Lower lobe of right lung (tissue), 2 donors: ENCODE measurements at regions of chr6 and their contacts with region 1.

Region 1: GRCh38 chr6:5401845-5402738 is 140.8 kb downstream of the FARS2 start:
- DNase-seq: no peak
- ATAC-seq: no peak
- H3K4me3 ChIP-seq: no peak overlapping the region
- H3K27ac ChIP-seq: no peak overlapping the region
- H3K4me1 ChIP-seq: no peaks in the 10 kb centered on the region
- H3K27me3 ChIP-seq: no peaks in the 10 kb centered on the region
- CTCF ChIP-seq: peak; percentile 37

Region 2: GRCh38 chr6:5143634-5144311 is 258.3 kb before region 1 on chr6:
- intact Hi-C with region 1: loop called (anchors 10 kb)
- DNase-seq: peak; percentile 89
- ATAC-seq: peak; percentile 75 to 82
- H3K4me3 ChIP-seq: no peak overlapping the region
- H3K27ac ChIP-seq: no peak overlapping the region
- H3K4me1 ChIP-seq: no peaks in the 10 kb centered on the region
- H3K27me3 ChIP-seq: no peaks in the 10 kb centered on the region
- CTCF ChIP-seq: peak; percentile 94

Region 3: DNA sequence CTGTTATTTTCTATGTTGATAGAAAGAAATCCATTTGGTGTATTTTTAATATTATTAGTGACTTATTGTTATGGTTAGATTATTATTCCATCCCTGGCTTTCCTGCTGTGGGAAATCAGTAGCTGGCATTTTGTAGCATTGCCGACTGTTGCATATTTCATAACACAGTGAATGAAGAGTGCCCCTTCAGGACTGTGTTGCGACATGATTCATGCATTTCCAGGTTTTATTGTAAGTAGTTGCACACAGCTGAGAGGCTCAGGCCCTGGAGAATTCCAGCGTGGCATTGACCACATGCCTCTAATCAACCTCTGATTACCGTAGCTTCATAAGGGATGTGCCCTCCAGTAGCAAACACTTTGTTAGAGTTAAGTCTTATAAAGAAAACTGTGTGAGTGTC is 123.1 kb after region 1 on chr6:
- intact Hi-C with region 1: no loop called
- DNase-seq: no peak
- ATAC-seq: peak; percentile 84 to 94
- H3K4me3 ChIP-seq: no peak overlapping the region
- H3K27ac ChIP-seq: no peak overlapping the region
- H3K4me1 ChIP-seq: peaks cover 13% of the 10 kb centered on the region
- H3K27me3 ChIP-seq: no peaks in the 10 kb centered on the region
- CTCF ChIP-seq: no peak

Region 4: GRCh38 chr6:5547556-5547955 is 145.5 kb after region 1 on chr6:
- intact Hi-C with region 1: no loop called
- DNase-seq: no peak
- ATAC-seq: no peak
- H3K4me3 ChIP-seq: no peak overlapping the region
- H3K27ac ChIP-seq: no peak overlapping the region
- H3K4me1 ChIP-seq: no peaks in the 10 kb centered on the region
- H3K27me3 ChIP-seq: no peaks in the 10 kb centered on the region
- CTCF ChIP-seq: no peak